A673 (cell line): ENCODE measurements at regions of chr11 and their contacts with region 1.

Region 1: GRCh38 chr11:27183672-27184457 is 143.2 kb downstream of the BBOX1 start:
- DNase-seq: peak; percentile 94
- H3K4me3 ChIP-seq: no peak overlapping the region
- H3K27ac ChIP-seq: no peak overlapping the region
- H3K4me1 ChIP-seq: peaks cover 11% of the 10 kb centered on the region
- H3K27me3 ChIP-seq: no peaks in the 10 kb centered on the region
- CTCF ChIP-seq: peak; percentile 100

Region 2: GRCh38 chr11:27171376-27171775 is 12.5 kb before region 1 on chr11:
- CTCF ChIA-PET with region 1: no interaction called
- POLR2A ChIA-PET with region 1: no interaction called
- intact Hi-C with region 1: no loop called
- DNase-seq: no peak
- H3K4me3 ChIP-seq: no peak overlapping the region
- H3K27ac ChIP-seq: no peak overlapping the region
- H3K4me1 ChIP-seq: no peaks in the 10 kb centered on the region
- H3K27me3 ChIP-seq: peaks cover 39% of the 10 kb centered on the region
- CTCF ChIP-seq: no peak

Region 3: DNA sequence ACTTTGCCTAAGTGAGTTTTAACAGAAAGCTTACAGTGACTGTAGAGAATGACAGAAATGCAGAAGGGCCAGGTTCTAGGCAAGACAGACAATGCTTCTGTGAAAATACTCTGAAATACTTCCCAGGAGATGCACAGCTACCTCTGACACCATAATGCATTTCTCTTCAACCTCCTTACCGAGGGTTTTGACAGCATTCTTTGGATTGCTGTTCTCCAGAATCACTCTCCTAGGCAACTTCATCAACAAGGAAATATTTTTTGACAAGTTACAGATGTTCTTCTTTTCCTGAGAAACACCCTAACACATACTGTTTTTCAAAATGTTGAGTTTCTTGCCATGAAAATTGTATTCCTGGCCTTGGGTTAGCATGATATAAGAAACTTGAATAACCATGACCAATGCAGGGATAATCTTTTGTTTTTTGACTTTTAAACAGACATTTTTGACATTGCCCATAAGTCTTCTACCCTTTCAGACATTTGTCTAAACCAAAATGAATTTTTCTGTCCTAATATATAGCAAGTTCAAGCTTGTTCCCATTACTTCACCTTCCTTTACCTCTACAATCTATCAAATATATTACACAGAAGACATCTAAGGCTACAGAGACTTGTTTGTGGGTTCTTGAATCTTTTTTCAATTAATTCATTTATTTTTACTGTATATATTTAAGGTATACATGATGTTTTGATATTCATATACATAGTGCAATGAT is 71.0 kb after region 1 on chr11:
- CTCF ChIA-PET with region 1: no interaction called
- POLR2A ChIA-PET with region 1: no interaction called
- intact Hi-C with region 1: loop called (anchors 5 kb)
- DNase-seq: no peak
- H3K4me3 ChIP-seq: no peak overlapping the region
- H3K27ac ChIP-seq: no peak overlapping the region
- H3K4me1 ChIP-seq: no peaks in the 10 kb centered on the region
- H3K27me3 ChIP-seq: no peaks in the 10 kb centered on the region
- CTCF ChIP-seq: no peak

Region 4: GRCh38 chr11:27296497-27296896 is 112.6 kb after region 1 on chr11:
- CTCF ChIA-PET with region 1: interaction called, 81 read pairs
- POLR2A ChIA-PET with region 1: no interaction called
- intact Hi-C with region 1: loop called (anchors 1 kb)
- DNase-seq: peak; percentile 91
- H3K4me3 ChIP-seq: no peak overlapping the region
- H3K27ac ChIP-seq: no peak overlapping the region
- H3K4me1 ChIP-seq: peaks cover 18% of the 10 kb centered on the region
- H3K27me3 ChIP-seq: no peaks in the 10 kb centered on the region
- CTCF ChIP-seq: peak; percentile 100

Region 5: DNA sequence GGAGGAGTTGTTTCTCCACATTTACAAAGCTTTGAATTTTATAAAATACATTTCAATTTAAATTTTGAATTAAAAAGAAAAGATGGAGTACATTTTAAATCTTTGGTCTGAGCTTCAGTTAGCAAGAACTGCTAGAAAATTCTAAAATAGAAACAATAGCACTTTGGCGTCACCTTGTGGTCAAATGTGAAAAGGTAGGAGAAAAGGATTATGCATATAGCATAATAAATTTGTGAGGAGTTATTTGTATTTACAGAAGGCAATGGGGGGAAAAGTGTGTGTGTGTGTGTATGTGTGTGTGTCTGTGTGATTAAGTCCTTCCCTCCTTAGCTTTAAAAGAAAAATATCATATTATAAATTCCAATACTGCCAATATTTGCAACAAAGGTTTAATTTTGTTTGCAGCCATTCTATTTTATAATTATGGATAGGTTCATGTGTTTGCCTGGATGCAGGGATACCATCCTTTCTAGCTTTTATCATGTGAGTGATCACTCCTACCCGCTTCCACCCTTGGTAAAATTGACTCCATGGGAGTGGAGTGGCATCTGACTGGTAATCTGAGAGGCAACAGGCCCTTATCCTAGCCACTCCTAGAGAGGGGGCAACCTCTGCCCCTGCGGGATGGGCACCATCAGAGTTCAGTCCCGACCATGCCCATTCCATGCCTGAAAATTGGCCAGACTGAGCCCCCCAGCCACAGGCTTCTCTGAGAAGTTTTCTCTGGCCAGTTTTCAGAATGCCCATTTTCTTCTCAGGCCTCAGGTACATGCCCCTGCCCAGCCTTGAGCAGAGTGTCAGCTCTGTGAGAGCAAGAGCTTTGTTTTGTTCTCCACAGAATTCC is 302.3 kb after region 1 on chr11:
- CTCF ChIA-PET with region 1: interaction called, 57 read pairs
- POLR2A ChIA-PET with region 1: no interaction called
- intact Hi-C with region 1: loop called (anchors 1 kb)
- DNase-seq: peak; percentile 93
- H3K4me3 ChIP-seq: no peak overlapping the region
- H3K27ac ChIP-seq: no peak overlapping the region
- H3K4me1 ChIP-seq: no peaks in the 10 kb centered on the region
- H3K27me3 ChIP-seq: no peaks in the 10 kb centered on the region
- CTCF ChIP-seq: peak; percentile 100